HepG2 (cell line): ENCODE measurements at regions of chr6 and their contacts with region 1.

Region 1: GRCh38 chr6:56955171-56956045 is 501 bp downstream of the BEND6 start:
- DNase-seq: peak; percentile 83
- ATAC-seq: peak; percentile 91
- H3K4me3 ChIP-seq: peak overlapping the region; percentile 51 to 75 (median 56)
- H3K27ac ChIP-seq: no peak overlapping the region
- H3K4me1 ChIP-seq: peaks cover 14% of the 10 kb centered on the region
- H3K27me3 ChIP-seq: peaks cover 0 to 14% of the 10 kb centered on the region in 2 experiments; a peak in 3 of 5 replicates
- CTCF ChIP-seq: peak; percentile 93
- EP300 ChIP-seq: no peak
- POLR2A ChIP-seq: no peak
- RAD21 ChIP-seq: peak; percentile 86

Region 2: GRCh38 chr6:55868771-55869479 is 1086.5 kb before region 1 on chr6:
- CTCF ChIA-PET with region 1: no interaction called
- POLR2A ChIA-PET with region 1: no interaction called
- in situ Hi-C with region 1: no loop called
- intact Hi-C with region 1: no loop called
- DNase-seq: no peak
- ATAC-seq: no peak
- H3K4me3 ChIP-seq: no peak overlapping the region
- H3K27ac ChIP-seq: no peak overlapping the region
- H3K4me1 ChIP-seq: no peaks in the 10 kb centered on the region
- H3K27me3 ChIP-seq: no peaks in the 10 kb centered on the region; a peak in 1 of 5 replicates
- CTCF ChIP-seq: no peak
- EP300 ChIP-seq: no peak
- POLR2A ChIP-seq: no peak
- RAD21 ChIP-seq: no peak

Region 3: DNA sequence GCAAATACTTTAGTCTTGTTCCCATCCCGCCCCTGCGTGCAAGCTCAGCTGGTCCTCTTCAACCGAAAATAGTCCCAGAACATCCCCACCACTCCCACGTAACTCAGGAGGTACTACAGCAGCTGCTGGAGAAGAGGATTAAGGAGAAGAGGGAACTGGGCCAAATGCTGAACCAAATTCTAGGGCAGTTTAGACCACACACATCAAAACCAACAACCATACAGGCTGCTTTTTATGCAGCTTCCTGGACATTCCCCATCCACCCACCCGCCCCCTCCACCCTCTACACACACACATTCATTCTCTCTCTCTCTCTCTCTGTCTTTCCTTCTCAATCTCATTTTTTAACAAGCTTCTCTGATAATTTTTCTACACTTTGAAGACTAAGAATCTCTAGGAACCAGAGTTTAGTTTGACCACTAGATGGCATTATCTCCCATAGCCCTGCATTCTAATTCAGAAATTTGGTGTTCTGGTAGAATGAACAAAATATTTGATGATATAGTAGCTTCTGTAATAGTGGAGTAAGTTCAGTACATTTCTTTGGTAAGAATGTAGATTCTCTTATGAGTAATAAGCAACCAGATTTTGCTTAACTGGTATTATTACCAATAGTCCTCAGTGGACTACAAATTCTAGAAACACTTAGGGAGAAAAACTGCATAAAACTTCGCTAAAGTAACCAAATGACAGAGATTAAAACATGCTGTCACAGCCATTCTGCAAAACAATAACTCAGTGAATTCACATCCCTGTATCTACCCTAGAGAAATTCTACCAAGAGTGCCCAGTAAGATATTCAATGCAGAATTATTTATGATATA is 52.6 kb before region 1 on chr6:
- CTCF ChIA-PET with region 1: interaction called, 3 read pairs
- POLR2A ChIA-PET with region 1: no interaction called
- in situ Hi-C with region 1: no loop called
- intact Hi-C with region 1: loop called (anchors 1 kb)
- DNase-seq: peak; percentile 25
- ATAC-seq: peak; percentile 54
- H3K4me3 ChIP-seq: no peak overlapping the region
- H3K27ac ChIP-seq: no peak overlapping the region
- H3K4me1 ChIP-seq: peaks cover 11% of the 10 kb centered on the region; the same call in 1 of the 2 replicates
- H3K27me3 ChIP-seq: peaks cover 0 to 1% of the 10 kb centered on the region in 2 experiments; a peak in 1 of 5 replicates
- CTCF ChIP-seq: peak; percentile 67
- EP300 ChIP-seq: no peak
- POLR2A ChIP-seq: no peak
- RAD21 ChIP-seq: peak; percentile 28; the same call in 1 of the 2 replicates

Region 4: GRCh38 chr6:56938649-56939191 is 16.7 kb before region 1 on chr6:
- CTCF ChIA-PET with region 1: no interaction called
- POLR2A ChIA-PET with region 1: no interaction called
- in situ Hi-C with region 1: no loop called
- intact Hi-C with region 1: no loop called
- DNase-seq: peak; percentile 13
- ATAC-seq: peak; percentile 57
- H3K4me3 ChIP-seq: no peak overlapping the region
- H3K27ac ChIP-seq: no peak overlapping the region
- H3K4me1 ChIP-seq: no peaks in the 10 kb centered on the region
- H3K27me3 ChIP-seq: no peaks in the 10 kb centered on the region
- CTCF ChIP-seq: no peak
- EP300 ChIP-seq: no peak
- POLR2A ChIP-seq: no peak
- RAD21 ChIP-seq: no peak

Region 5: GRCh38 chr6:56977192-56977591 is 21.8 kb after region 1 on chr6:
- CTCF ChIA-PET with region 1: no interaction called
- POLR2A ChIA-PET with region 1: no interaction called
- in situ Hi-C with region 1: no loop called
- intact Hi-C with region 1: no loop called
- DNase-seq: no peak
- ATAC-seq: no peak
- H3K4me3 ChIP-seq: no peak overlapping the region
- H3K27ac ChIP-seq: no peak overlapping the region
- H3K4me1 ChIP-seq: peaks cover 13% of the 10 kb centered on the region
- H3K27me3 ChIP-seq: peaks cover 0 to 12% of the 10 kb centered on the region in 2 experiments; a peak in 2 of 5 replicates
- CTCF ChIP-seq: no peak
- EP300 ChIP-seq: no peak
- POLR2A ChIP-seq: no peak
- RAD21 ChIP-seq: no peak

Region 6: DNA sequence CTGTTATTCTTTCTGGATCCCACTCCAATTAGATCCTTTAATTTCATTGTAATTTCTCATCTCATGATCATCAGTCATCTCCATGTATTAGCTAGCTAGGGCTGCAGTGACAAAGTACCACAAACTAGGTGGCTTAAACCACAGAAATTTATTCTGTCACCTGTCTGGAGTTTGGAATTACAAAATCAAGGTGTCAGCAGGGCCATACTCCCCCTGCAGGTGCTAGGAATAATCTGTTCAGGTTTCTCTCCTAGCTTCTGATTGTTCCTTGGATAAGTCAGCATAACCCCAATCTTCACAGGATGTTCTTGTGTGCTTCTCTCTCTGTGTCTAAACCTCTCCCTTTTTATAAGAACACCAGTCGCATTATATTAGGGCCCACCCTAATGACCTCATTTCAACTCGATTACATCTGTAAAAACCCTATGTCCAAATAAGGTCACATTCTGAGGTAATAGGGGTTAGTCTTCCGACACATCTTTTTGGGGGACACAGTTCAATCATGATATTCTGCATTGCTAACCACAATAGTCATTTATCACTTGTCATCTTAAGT is 40.0 kb after region 1 on chr6:
- CTCF ChIA-PET with region 1: no interaction called
- POLR2A ChIA-PET with region 1: no interaction called
- in situ Hi-C with region 1: no loop called
- intact Hi-C with region 1: loop called (anchors 1 kb)
- DNase-seq: peak; percentile 21
- ATAC-seq: peak; percentile 69
- H3K4me3 ChIP-seq: no peak overlapping the region
- H3K27ac ChIP-seq: no peak overlapping the region
- H3K4me1 ChIP-seq: no peaks in the 10 kb centered on the region
- H3K27me3 ChIP-seq: peaks cover 0 to 6% of the 10 kb centered on the region in 2 experiments; a peak in 3 of 5 replicates
- CTCF ChIP-seq: 0 out of 2 replicates have a peak, but pooled peaks have one; percentile 26
- EP300 ChIP-seq: no peak
- POLR2A ChIP-seq: no peak
- RAD21 ChIP-seq: no peak

Region 7: GRCh38 chr6:57021086-57021720 is 65.8 kb after region 1 on chr6:
- CTCF ChIA-PET with region 1: interaction called, 6 read pairs
- POLR2A ChIA-PET with region 1: no interaction called
- in situ Hi-C with region 1: no loop called
- intact Hi-C with region 1: loop called (anchors 1 kb)
- DNase-seq: peak; percentile 46
- ATAC-seq: peak; percentile 91
- H3K4me3 ChIP-seq: no peak overlapping the region
- H3K27ac ChIP-seq: no peak overlapping the region
- H3K4me1 ChIP-seq: no peaks in the 10 kb centered on the region
- H3K27me3 ChIP-seq: peaks cover 0 to 4% of the 10 kb centered on the region in 2 experiments; a peak in 1 of 5 replicates
- CTCF ChIP-seq: peak; percentile 65
- EP300 ChIP-seq: no peak
- POLR2A ChIP-seq: no peak
- RAD21 ChIP-seq: no peak

Region 8: DNA sequence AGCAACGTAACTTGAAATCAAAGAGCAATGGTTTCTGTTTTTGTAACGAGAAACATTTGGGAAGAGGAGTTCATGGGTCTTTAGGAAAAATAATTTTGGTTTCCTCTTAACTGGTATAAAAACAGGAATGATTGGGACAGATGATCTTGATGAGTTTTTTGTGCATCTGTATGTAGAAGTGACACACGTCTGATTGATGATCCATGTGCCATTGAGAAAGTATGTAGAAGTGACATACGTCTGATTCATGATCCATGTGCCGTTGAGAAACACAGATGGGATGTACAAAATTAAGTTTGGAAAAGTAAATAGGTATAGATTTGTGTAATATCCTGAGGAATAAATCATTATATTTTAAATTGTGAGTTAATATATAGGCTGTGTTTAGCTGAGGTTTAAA is 93.2 kb after region 1 on chr6:
- CTCF ChIA-PET with region 1: no interaction called
- POLR2A ChIA-PET with region 1: interaction called, 3 read pairs
- in situ Hi-C with region 1: no loop called
- intact Hi-C with region 1: loop called (anchors 5 kb)
- DNase-seq: no peak
- ATAC-seq: no peak
- H3K4me3 ChIP-seq: peak overlapping the region in 2 of 3 experiments; percentile 19 to 38; a peak in 3 of 6 replicates
- H3K27ac ChIP-seq: no peak overlapping the region
- H3K4me1 ChIP-seq: peaks cover 29% of the 10 kb centered on the region
- H3K27me3 ChIP-seq: no peaks in the 10 kb centered on the region
- CTCF ChIP-seq: no peak
- EP300 ChIP-seq: no peak
- POLR2A ChIP-seq: no peak
- RAD21 ChIP-seq: no peak

Region 9: GRCh38 chr6:57089687-57090460 is 134.5 kb after region 1 on chr6 and contains the start of gene ZNF451:
- CTCF ChIA-PET with region 1: no interaction called
- POLR2A ChIA-PET with region 1: no interaction called
- in situ Hi-C with region 1: no loop called
- intact Hi-C with region 1: loop called (anchors 10 kb)
- DNase-seq: peak; percentile 97
- ATAC-seq: peak; percentile 98
- H3K4me3 ChIP-seq: peak within 1 kb of the TSS; percentile 45 to 66 (median 62)
- H3K27ac ChIP-seq: peak within 1 kb of the TSS; percentile 65
- H3K4me1 ChIP-seq: peaks cover 67% of the 10 kb centered on the region
- H3K27me3 ChIP-seq: no peaks in the 10 kb centered on the region
- CTCF ChIP-seq: peak; percentile 41; the same call in 1 of the 2 replicates
- EP300 ChIP-seq: peak in 1 of 2 experiments; percentile 60; a peak in 2 of 4 replicates
- POLR2A ChIP-seq: peak; percentile 83 to 85
- RAD21 ChIP-seq: peak; percentile 62
- total RNA-seq, gene ZNF451: 65.7 and 104 TPM in 2 replicates

Region 10: GRCh38 chr6:57108691-57109090 is 153.3 kb after region 1 on chr6:
- CTCF ChIA-PET with region 1: no interaction called
- POLR2A ChIA-PET with region 1: no interaction called
- in situ Hi-C with region 1: no loop called
- intact Hi-C with region 1: no loop called
- DNase-seq: no peak
- ATAC-seq: no peak
- H3K4me3 ChIP-seq: no peak overlapping the region
- H3K27ac ChIP-seq: peak overlapping the region; percentile 4
- H3K4me1 ChIP-seq: peaks cover 71% of the 10 kb centered on the region
- H3K27me3 ChIP-seq: no peaks in the 10 kb centered on the region
- CTCF ChIP-seq: no peak
- EP300 ChIP-seq: no peak
- POLR2A ChIP-seq: no peak
- RAD21 ChIP-seq: no peak